Keratinocyte (primary cell): ENCODE measurements at regions of chr12 and their contacts with region 1.

Region 1: GRCh38 chr12:57744777-57745484 is at the start of gene TSPAN31:
- DNase-seq: no peak
- H3K4me3 ChIP-seq: peak within 1 kb of the TSS; percentile 81 to 99 (median 97)
- H3K27ac ChIP-seq: peak within 1 kb of the TSS; percentile 98
- H3K4me1 ChIP-seq: peaks cover 16% of the 10 kb centered on the region
- H3K27me3 ChIP-seq: peaks cover 10% of the 10 kb centered on the region
- CTCF ChIP-seq: no peak
- polyA plus RNA-seq, gene TSPAN31: 37.4 to 47.7 TPM (median 40.6 TPM) in 3 replicates

Region 2: GRCh38 chr12:57583008-57583831 is 161.7 kb before region 1 on chr12:
- dilution Hi-C with region 1: loop called (anchors 25 kb)
- DNase-seq: peak; percentile 30
- H3K4me3 ChIP-seq: no peak overlapping the region
- H3K27ac ChIP-seq: no peak overlapping the region
- H3K4me1 ChIP-seq: no peaks in the 10 kb centered on the region
- H3K27me3 ChIP-seq: peaks cover 14% of the 10 kb centered on the region
- CTCF ChIP-seq: peak; percentile 81 to 96 (median 91)